Upper lobe of right lung (tissue), 1 donor: ENCODE measurements at regions of chr10 and their contacts with region 1.

Region 1: DNA sequence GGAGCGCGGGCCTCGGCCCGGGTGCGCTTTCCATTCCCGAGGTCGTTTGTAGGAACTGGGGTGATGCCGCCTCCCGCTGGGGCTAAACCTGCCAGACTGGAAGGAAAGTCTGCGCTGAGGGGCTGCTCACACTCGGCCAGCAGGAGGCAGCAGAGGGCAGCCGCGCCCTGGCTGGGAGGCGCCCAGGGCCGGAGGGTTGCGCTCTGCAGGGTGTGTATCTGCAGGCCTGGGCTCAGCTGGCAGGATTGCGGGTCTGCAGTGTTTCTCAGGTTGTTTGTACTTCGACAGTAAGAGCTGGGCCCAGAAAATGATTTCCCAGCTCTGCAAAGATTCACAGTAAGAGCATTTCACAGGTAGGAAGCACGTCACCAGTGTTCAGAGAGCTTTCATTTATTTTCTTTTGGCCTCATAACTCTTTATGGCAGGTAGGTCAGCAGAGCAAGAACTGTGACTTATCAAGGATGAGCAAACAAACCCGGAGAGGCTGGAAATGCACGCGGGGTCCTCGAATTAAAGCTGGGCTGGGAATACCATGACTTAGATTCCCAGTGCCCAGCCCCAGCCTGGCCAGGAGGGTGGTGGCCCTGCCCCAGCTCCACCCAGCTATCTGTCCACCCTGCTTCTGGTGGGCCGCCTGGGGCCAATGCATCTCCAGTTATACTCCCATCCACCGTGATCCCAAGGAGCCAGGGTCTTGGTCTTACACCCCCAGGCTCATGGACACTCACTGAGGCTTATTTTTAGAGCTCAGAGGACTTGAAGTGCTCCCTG is 15.2 kb upstream of the PPP2R2D start:
- DNase-seq: peak; percentile 91
- ATAC-seq: peak; percentile 99
- H3K4me3 ChIP-seq: no peak overlapping the region
- H3K27ac ChIP-seq: no peak overlapping the region
- H3K4me1 ChIP-seq: no peaks in the 10 kb centered on the region
- H3K27me3 ChIP-seq: peaks cover 4% of the 10 kb centered on the region
- CTCF ChIP-seq: peak; percentile 98

Region 2: DNA sequence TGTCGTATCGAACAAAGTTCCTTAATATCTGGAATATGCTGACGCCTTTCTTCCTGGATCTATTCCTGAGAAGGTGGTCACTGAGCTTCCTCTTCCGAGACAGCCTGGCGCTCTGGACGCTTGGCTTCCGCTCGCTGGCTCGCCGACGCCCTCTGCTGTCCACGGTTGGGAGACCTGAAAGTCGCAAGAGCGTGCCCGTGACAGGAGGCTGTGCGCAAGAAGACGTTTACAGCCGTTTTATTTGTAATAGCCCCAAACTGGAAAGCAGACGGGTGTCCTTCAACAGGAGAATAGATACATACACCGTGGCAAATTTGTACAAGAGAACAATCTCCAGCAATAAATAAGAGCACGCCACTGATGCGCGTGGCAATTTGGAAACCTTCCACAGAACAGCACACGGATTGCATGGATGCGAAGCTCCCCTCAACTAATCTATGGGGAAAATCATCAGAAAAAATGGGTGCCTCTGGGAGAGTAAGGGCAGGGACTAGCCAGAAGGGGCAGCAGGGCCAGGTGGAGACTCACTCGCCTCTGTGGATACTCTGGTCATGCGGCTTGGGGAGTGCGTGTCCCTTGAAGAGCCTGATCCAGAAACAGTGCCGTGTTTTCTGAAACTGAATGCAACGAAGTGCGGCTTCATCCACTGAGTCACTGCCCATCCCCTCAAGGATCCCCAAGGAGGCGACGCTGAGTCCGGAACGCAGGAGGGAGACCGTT is 137.7 kb after region 1 on chr10:
- intact Hi-C with region 1: loop called (anchors 2 kb)
- DNase-seq: peak; percentile 93
- ATAC-seq: peak; percentile 94
- H3K4me3 ChIP-seq: peak overlapping the region; percentile 32
- H3K27ac ChIP-seq: no peak overlapping the region
- H3K4me1 ChIP-seq: no peaks in the 10 kb centered on the region
- H3K27me3 ChIP-seq: peaks cover 43% of the 10 kb centered on the region
- CTCF ChIP-seq: peak; percentile 88